Activated CD4-positive, alpha-beta memory T cell treated with anti-CD3 and anti-CD28 coated beads for 36 hours (primary cell): ENCODE measurements at regions of chr12 and their contacts with region 1.

Region 1: GRCh38 chr12:75480469-75480949 is at the start of gene GLIPR1:
- DNase-seq: peak; percentile 86
- H3K4me3 Mint-ChIP-seq: peak within 1 kb of the TSS; percentile 89
- H3K27ac Mint-ChIP-seq: peak within 1 kb of the TSS; percentile 88
- H3K4me1 Mint-ChIP-seq: peaks cover 85% of the 10 kb centered on the region
- H3K27me3 Mint-ChIP-seq: peaks cover 1% of the 10 kb centered on the region
- total RNA-seq, gene GLIPR1: 5.8 to 6.8 TPM

Region 2: GRCh38 chr12:75341832-75342231 is 138.7 kb before region 1 on chr12:
- CTCF ChIA-PET with region 1: no interaction called
- POLR2A ChIA-PET with region 1: no interaction called
- intact Hi-C with region 1: loop called (anchors 1 kb)
- DNase-seq: no peak
- H3K4me3 Mint-ChIP-seq: no peak overlapping the region
- H3K27ac Mint-ChIP-seq: no peak overlapping the region
- H3K4me1 Mint-ChIP-seq: peaks cover 12% of the 10 kb centered on the region
- H3K27me3 Mint-ChIP-seq: peaks cover 12% of the 10 kb centered on the region

Region 3: GRCh38 chr12:75374971-75375370 is 105.5 kb before region 1 on chr12:
- CTCF ChIA-PET with region 1: no interaction called
- POLR2A ChIA-PET with region 1: no interaction called
- intact Hi-C with region 1: no loop called
- DNase-seq: no peak
- H3K4me3 Mint-ChIP-seq: no peak overlapping the region
- H3K27ac Mint-ChIP-seq: no peak overlapping the region
- H3K4me1 Mint-ChIP-seq: no peaks in the 10 kb centered on the region
- H3K27me3 Mint-ChIP-seq: no peaks in the 10 kb centered on the region

Region 4: GRCh38 chr12:75505706-75506312 is 25.3 kb after region 1 on chr12:
- CTCF ChIA-PET with region 1: interaction called, 70 read pairs
- POLR2A ChIA-PET with region 1: interaction called, 5 read pairs
- intact Hi-C with region 1: loop called (anchors 1 kb)
- DNase-seq: no peak
- H3K4me3 Mint-ChIP-seq: no peak overlapping the region
- H3K27ac Mint-ChIP-seq: no peak overlapping the region
- H3K4me1 Mint-ChIP-seq: peaks cover 26% of the 10 kb centered on the region
- H3K27me3 Mint-ChIP-seq: no peaks in the 10 kb centered on the region

Region 5: DNA sequence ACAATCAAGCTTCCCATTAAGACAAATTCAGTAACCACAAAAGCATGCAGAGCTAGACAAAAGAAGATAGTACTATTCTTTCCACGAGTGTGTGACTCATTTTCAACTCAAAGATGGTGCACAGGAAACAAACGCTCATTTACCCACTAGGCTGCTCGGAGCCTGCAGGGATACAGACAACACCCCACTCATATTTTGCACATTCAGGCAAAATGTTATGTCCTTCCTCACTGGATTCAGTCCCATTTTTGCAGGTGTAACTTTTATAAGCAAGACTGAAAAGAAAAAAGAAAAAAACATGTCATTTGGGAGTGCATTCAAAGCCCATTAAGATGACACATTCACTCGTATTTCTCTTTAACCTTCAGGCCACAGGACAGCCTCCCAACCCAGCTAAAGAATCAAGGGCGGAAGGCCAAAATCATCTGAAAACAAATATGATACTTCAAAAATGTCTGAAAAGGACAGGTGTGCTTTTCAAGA is 178.4 kb after region 1 on chr12:
- CTCF ChIA-PET with region 1: no interaction called
- POLR2A ChIA-PET with region 1: no interaction called
- intact Hi-C with region 1: loop called (anchors 5 kb)
- DNase-seq: peak; percentile 27
- H3K4me3 Mint-ChIP-seq: no peak overlapping the region
- H3K27ac Mint-ChIP-seq: no peak overlapping the region
- H3K4me1 Mint-ChIP-seq: peaks cover 14% of the 10 kb centered on the region
- H3K27me3 Mint-ChIP-seq: peaks cover under 1% of the 10 kb centered on the region

Region 6: GRCh38 chr12:75977952-75978671 is 497.6 kb after region 1 on chr12:
- CTCF ChIA-PET with region 1: no interaction called
- POLR2A ChIA-PET with region 1: no interaction called
- intact Hi-C with region 1: loop called (anchors 1 kb)
- DNase-seq: peak; percentile 88
- H3K4me3 Mint-ChIP-seq: peak overlapping the region; percentile 34
- H3K27ac Mint-ChIP-seq: peak overlapping the region; percentile 97
- H3K4me1 Mint-ChIP-seq: peaks cover 63% of the 10 kb centered on the region
- H3K27me3 Mint-ChIP-seq: no peaks in the 10 kb centered on the region

Region 7: GRCh38 chr12:76083904-76084862 is 603.7 kb after region 1 on chr12 and contains the start of gene NAP1L1:
- CTCF ChIA-PET with region 1: interaction called, 3 read pairs
- POLR2A ChIA-PET with region 1: interaction called, 4 read pairs
- intact Hi-C with region 1: loop called (anchors 1 kb)
- DNase-seq: peak; percentile 98
- H3K4me3 Mint-ChIP-seq: peak within 1 kb of the TSS; percentile 93
- H3K27ac Mint-ChIP-seq: peak within 1 kb of the TSS; percentile 99
- H3K4me1 Mint-ChIP-seq: peaks cover 42% of the 10 kb centered on the region
- H3K27me3 Mint-ChIP-seq: no peaks in the 10 kb centered on the region
- total RNA-seq, gene NAP1L1: 889 to 895 TPM